Endothelial cell of umbilical vein (primary cell): ENCODE measurements at regions of chr1 and their contacts with region 1.

Region 1: DNA sequence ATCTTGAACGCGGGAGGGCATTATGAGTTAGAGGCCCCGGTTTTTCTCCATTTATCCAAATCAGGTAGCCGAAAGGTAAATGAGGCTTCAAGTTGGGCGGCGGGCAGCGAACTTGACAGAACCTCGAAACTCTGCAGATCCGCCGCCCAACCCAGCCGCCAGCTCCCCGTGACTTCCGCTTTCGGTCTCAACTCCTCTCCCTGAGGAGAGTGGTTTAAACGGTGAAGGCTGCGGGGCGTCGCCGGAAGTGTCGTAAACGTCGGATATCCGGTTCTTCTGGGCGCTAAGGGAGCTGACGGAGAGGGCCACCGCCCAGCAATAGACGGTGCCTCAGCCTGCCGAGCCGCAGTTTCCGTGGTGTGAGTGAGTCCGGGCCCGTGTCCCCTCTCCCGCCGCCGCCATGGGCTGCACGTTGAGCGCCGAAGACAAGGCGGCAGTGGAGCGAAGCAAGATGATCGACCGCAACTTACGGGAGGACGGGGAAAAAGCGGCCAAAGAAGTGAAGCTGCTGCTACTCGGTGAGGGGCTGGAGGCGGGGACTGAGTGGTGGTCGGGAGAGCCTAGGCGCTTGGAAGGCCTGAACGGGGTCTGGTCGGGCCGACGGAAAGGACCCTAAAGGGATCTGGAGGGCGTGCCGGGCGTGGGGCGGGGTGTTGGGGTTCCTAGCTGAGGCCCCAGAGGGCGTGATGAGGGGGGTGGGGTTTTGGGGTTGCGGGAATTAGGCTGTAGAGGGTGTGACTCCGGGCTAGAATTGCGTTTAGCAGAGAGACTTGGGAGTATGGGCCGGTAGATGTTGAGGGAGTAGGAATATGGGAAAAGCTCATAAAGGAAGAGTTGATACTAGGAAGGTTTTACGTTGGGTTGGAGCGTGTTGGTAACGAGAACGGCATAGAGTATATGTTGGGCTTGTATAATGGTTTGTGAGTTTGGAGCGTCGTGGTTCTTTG is at the start of gene GNAI3:
- DNase-seq: peak; percentile 96
- H3K4me3 ChIP-seq: peak within 1 kb of the TSS; percentile 75 to 98 (median 96)
- H3K27ac ChIP-seq: peak within 1 kb of the TSS; percentile 87
- H3K4me1 ChIP-seq: peaks cover 29% of the 10 kb centered on the region
- H3K27me3 ChIP-seq: peaks cover 0 to 2% of the 10 kb centered on the region in 2 experiments
- CTCF ChIP-seq: no peak
- POLR2A ChIP-seq: peak; percentile 89
- total RNA-seq, gene GNAI3: 12.9 and 14.0 TPM in 2 replicates

Region 2: GRCh38 chr1:109370712-109371455 is 177.7 kb before region 1 on chr1:
- CTCF ChIA-PET with region 1: no interaction called
- POLR2A ChIA-PET with region 1: no interaction called
- dilution Hi-C with region 1: no loop called
- intact Hi-C with region 1: no loop called
- DNase-seq: no peak
- H3K4me3 ChIP-seq: no peak overlapping the region
- H3K27ac ChIP-seq: no peak overlapping the region
- H3K4me1 ChIP-seq: no peaks in the 10 kb centered on the region
- H3K27me3 ChIP-seq: peaks cover 2 to 5% of the 10 kb centered on the region in 2 experiments
- CTCF ChIP-seq: no peak
- POLR2A ChIP-seq: no peak

Region 3: GRCh38 chr1:109579491-109579890 is 30.9 kb after region 1 on chr1:
- CTCF ChIA-PET with region 1: interaction called, 8 read pairs
- POLR2A ChIA-PET with region 1: no interaction called
- dilution Hi-C with region 1: no loop called
- intact Hi-C with region 1: loop called (anchors 1 kb)
- DNase-seq: no peak
- H3K4me3 ChIP-seq: no peak overlapping the region
- H3K27ac ChIP-seq: no peak overlapping the region
- H3K4me1 ChIP-seq: peaks cover 20% of the 10 kb centered on the region
- H3K27me3 ChIP-seq: no peaks in the 10 kb centered on the region
- CTCF ChIP-seq: no peak
- POLR2A ChIP-seq: no peak

Region 4: GRCh38 chr1:109620841-109621286 is 72.3 kb after region 1 on chr1:
- CTCF ChIA-PET with region 1: interaction called, 48 read pairs
- POLR2A ChIA-PET with region 1: interaction called, 12 read pairs
- dilution Hi-C with region 1: no loop called
- intact Hi-C with region 1: loop called (anchors 1 kb)
- DNase-seq: peak; percentile 95
- H3K4me3 ChIP-seq: peak overlapping the region; percentile 74 to 83 (median 76)
- H3K27ac ChIP-seq: peak overlapping the region; percentile 97
- H3K4me1 ChIP-seq: peaks cover 49% of the 10 kb centered on the region
- H3K27me3 ChIP-seq: no peaks in the 10 kb centered on the region
- CTCF ChIP-seq: no peak
- POLR2A ChIP-seq: no peak

Region 5: DNA sequence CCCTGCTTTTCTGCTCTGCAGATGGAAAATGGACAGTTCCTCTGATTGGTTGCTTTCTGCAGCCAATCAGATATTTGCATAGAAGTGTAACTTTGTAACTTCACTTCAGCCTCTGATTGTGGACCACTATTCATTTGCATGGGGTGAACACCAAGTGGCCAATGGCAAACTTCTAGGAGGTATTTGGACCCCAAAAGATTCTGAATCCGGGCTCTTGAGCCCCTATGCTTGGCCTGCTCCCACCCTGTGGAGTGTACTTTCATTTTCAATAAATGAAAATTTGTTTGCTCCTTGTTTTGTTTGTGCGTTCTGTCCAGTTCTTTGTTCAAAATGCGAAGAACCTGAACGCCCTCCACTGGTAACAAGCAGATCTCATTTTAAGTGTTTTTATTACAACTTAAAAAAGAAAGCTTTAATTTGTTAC is 100.9 kb after region 1 on chr1:
- CTCF ChIA-PET with region 1: interaction called, 81 read pairs
- POLR2A ChIA-PET with region 1: no interaction called
- dilution Hi-C with region 1: no loop called
- intact Hi-C with region 1: no loop called
- DNase-seq: peak; percentile 60
- H3K4me3 ChIP-seq: peak overlapping the region; percentile 18 to 54 (median 37)
- H3K27ac ChIP-seq: no peak overlapping the region
- H3K4me1 ChIP-seq: no peaks in the 10 kb centered on the region
- H3K27me3 ChIP-seq: peaks cover 16 to 23% of the 10 kb centered on the region in 2 experiments
- CTCF ChIP-seq: peak in 1 of 2 donors; percentile 27
- POLR2A ChIP-seq: no peak

Region 6: GRCh38 chr1:109718491-109718890 is 169.9 kb after region 1 on chr1:
- CTCF ChIA-PET with region 1: interaction called, 11 read pairs
- POLR2A ChIA-PET with region 1: no interaction called
- dilution Hi-C with region 1: no loop called
- intact Hi-C with region 1: no loop called
- DNase-seq: peak; percentile 32
- H3K4me3 ChIP-seq: no peak overlapping the region
- H3K27ac ChIP-seq: no peak overlapping the region
- H3K4me1 ChIP-seq: peaks cover 8% of the 10 kb centered on the region
- H3K27me3 ChIP-seq: no peaks in the 10 kb centered on the region
- CTCF ChIP-seq: peak in 1 of 2 donors; percentile 12
- POLR2A ChIP-seq: no peak

Region 7: DNA sequence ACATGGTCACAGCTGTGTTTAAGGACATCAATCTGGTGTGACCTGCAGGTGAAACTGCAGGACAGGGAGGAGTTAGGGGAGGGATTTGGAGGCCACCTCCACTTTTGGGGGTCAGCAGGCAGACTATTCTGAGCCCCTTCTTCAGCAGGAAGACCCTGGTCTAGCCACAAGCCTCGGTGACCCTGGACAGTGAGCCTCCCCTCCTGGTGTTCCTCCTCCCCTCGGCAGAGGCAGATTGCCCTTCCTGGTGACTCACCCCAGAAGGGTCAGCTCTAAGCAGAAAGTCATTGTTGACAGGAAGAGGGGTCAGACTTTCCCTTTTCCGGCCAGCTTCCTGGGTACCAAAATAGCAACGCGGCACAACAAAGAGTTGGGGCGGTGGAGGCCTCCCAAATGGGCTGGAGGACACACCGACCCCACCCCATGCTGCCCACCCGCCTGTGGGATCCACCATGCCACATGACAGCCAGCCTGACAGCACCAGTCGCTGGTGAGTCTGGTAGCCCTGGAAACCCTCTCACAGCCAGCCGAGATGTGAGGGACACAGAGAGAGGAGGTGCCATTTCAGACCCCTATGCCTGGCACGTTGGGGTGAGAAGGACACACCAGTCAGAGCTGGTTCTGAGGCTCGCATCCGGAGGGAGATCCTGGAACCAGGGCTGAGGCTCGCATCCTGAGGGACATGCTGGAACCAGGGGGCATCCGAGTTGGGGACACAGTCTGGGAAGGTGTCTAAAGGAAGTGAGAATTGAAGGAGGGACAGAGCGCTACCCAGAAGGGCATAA is 347.3 kb after region 1 on chr1:
- CTCF ChIA-PET with region 1: no interaction called
- POLR2A ChIA-PET with region 1: no interaction called
- dilution Hi-C with region 1: no loop called
- intact Hi-C with region 1: loop called (anchors 10 kb)
- DNase-seq: peak; percentile 85
- H3K4me3 ChIP-seq: no peak overlapping the region
- H3K27ac ChIP-seq: peak overlapping the region; percentile 71
- H3K4me1 ChIP-seq: peaks cover 43% of the 10 kb centered on the region
- H3K27me3 ChIP-seq: no peaks in the 10 kb centered on the region
- CTCF ChIP-seq: no peak
- POLR2A ChIP-seq: no peak